Activated CD8-positive, alpha-beta T cell treated with anti-CD3 and anti-CD28 coated beads, Interleukin-2, amount 10 ng/mL, durations not matched to agents 7 days and 5 days (primary cell): ENCODE measurements at regions of chr4 and their contacts with region 1.

Region 1: GRCh38 chr4:15756361-15756861 is 21.7 kb upstream of the CD38 start:
- DNase-seq: peak; percentile 90
- ATAC-seq: peak; percentile 84
- H3K4me3 Mint-ChIP-seq: peak overlapping the region; percentile 74
- H3K27ac Mint-ChIP-seq: peak overlapping the region; percentile 90
- H3K4me1 Mint-ChIP-seq: peaks cover 67% of the 10 kb centered on the region
- H3K27me3 Mint-ChIP-seq: no peaks in the 10 kb centered on the region

Region 2: GRCh38 chr4:15681207-15682015 is 75.0 kb before region 1 on chr4 and contains the start of gene FAM200B:
- CTCF ChIA-PET with region 1: interaction called, 4 read pairs
- POLR2A ChIA-PET with region 1: interaction called, 10 read pairs
- DNase-seq: peak; percentile 99
- ATAC-seq: peak; percentile 99
- H3K4me3 Mint-ChIP-seq: peak within 1 kb of the TSS; percentile 99
- H3K27ac Mint-ChIP-seq: peak within 1 kb of the TSS; percentile 97
- H3K4me1 Mint-ChIP-seq: peaks cover 37% of the 10 kb centered on the region
- H3K27me3 Mint-ChIP-seq: no peaks in the 10 kb centered on the region
- total RNA-seq, gene FAM200B: 15.8 to 17.2 TPM

Region 3: GRCh38 chr4:15744016-15744545 is 12.3 kb before region 1 on chr4:
- CTCF ChIA-PET with region 1: interaction called, 10 read pairs
- POLR2A ChIA-PET with region 1: interaction called, 4 read pairs
- DNase-seq: no peak
- ATAC-seq: no peak
- H3K4me3 Mint-ChIP-seq: no peak overlapping the region
- H3K27ac Mint-ChIP-seq: no peak overlapping the region
- H3K4me1 Mint-ChIP-seq: peaks cover 23% of the 10 kb centered on the region
- H3K27me3 Mint-ChIP-seq: no peaks in the 10 kb centered on the region

Region 4: DNA sequence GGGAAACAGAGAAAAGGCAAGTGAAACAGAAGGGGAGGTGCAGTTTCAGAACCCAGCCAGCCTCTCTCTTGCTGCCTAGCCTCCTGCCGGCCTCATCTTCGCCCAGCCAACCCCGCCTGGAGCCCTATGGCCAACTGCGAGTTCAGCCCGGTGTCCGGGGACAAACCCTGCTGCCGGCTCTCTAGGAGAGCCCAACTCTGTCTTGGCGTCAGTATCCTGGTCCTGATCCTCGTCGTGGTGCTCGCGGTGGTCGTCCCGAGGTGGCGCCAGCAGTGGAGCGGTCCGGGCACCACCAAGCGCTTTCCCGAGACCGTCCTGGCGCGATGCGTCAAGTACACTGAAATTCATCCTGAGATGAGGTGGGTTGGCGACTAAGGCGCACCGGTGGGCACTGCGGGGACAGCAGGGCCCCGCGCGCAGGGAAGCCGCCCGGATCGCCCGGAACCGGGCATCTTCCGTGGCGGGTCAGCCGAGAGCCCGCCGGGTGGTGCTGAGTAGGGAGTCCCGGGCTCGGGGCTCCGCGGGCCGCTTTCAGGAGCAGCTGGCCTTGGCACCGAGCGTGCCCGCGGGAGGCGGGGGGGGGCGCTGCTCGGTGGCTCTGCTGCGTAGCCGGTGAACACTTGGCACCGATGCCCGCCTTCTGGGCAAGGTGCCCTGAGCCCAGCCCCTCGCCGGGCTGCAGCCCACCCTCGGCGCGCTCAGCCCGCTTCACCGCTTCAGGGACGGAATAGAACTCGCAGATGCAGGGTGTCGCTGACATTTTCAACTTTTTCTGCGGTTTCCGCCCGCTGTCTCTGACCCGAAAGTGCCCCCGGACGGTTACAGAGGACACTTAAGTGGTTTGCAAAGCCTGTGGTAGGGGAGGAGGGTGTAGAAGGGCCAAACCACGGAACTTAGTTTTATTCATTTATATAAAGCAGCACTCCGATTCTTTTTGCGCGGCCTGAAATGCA is 22.2 kb after region 1 on chr4 and contains the start of gene CD38:
- CTCF ChIA-PET with region 1: interaction called, 82 read pairs
- POLR2A ChIA-PET with region 1: interaction called, 29 read pairs
- DNase-seq: peak; percentile 82
- ATAC-seq: peak; percentile 75
- H3K4me3 Mint-ChIP-seq: peak within 1 kb of the TSS; percentile 86
- H3K27ac Mint-ChIP-seq: peak within 1 kb of the TSS; percentile 88
- H3K4me1 Mint-ChIP-seq: peaks cover 76% of the 10 kb centered on the region
- H3K27me3 Mint-ChIP-seq: peaks cover 3% of the 10 kb centered on the region
- total RNA-seq, gene CD38: 88.8 to 93.4 TPM

Region 5: DNA sequence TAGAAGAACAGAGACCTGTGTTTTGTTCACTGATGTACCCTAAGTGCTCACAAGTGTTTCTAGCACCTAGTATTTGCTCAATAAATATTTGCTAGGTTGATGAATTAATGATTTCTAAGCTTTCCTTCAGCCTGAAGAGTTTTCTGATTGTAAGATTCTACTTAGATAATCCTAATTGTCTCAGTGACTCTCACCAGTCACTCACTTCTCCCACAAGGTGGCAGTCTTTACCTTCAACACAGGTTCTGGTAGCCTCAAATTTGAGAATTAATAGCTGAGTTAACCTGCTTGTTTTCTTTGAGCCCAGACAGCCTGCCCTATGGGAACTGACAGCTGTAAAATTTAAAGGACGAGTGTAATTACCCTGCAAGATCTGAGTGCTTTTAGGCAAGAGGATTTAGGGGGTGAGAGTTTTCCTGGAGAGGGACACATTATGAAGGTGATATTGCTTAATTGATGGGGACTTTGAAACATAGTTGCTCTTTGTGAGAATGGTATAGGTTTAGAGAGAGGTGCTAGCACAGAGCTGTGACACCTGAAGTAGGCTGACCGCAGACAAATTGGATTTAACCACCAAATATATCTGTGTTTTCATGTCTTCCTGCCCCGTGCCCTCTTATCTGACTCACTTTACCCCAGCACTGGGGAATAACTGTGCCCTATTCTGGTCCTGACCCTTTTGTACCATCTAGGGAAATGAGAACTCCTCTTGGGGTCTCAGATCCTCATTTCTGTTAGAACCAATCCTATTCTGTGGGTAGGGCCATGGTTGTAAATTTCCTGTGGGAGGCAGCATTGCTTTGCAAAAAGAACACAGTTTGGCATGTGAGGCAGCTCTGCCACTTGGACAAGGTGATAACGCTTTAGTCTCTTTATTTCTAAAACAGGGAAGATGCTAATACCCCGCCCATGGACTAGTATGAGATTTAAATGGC is 49.4 kb after region 1 on chr4:
- CTCF ChIA-PET with region 1: interaction called, 30 read pairs
- POLR2A ChIA-PET with region 1: no interaction called
- DNase-seq: peak; percentile 63
- ATAC-seq: peak; percentile 64
- H3K4me3 Mint-ChIP-seq: no peak overlapping the region
- H3K27ac Mint-ChIP-seq: peak overlapping the region; percentile 21
- H3K4me1 Mint-ChIP-seq: peaks cover 65% of the 10 kb centered on the region
- H3K27me3 Mint-ChIP-seq: no peaks in the 10 kb centered on the region

Region 6: DNA sequence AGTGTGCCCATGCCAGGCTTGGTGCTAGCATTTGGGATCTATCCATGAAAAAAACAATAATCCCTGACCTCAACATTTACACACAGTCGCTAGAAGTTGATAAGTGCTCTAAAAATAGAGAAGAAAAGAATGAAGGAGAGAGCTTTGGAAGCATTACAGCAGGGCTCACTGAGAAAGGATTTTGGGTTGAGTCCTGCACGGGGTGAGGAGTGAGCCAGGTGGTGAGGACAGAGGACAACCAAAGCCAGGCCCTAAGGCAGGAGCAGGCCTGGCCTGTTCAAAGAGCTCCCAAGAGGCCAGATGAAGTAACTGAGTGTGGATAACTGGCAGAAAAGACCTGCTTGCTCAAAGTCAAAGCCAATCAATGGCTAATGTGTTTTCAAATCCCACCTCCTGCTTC is 348.1 kb after region 1 on chr4:
- CTCF ChIA-PET with region 1: no interaction called
- POLR2A ChIA-PET with region 1: no interaction called
- DNase-seq: no peak
- ATAC-seq: no peak
- H3K4me3 Mint-ChIP-seq: no peak overlapping the region
- H3K27ac Mint-ChIP-seq: no peak overlapping the region
- H3K4me1 Mint-ChIP-seq: no peaks in the 10 kb centered on the region
- H3K27me3 Mint-ChIP-seq: peaks cover 6% of the 10 kb centered on the region